Mammary epithelial cell (primary cell): ENCODE measurements at regions of chr7 and their contacts with region 1.

Region 1: GRCh38 chr7:154927624-154928143 is 75.2 kb downstream of the PAXIP1 start:
- DNase-seq: peak; percentile 72
- H3K4me3 ChIP-seq: peak overlapping the region; percentile 56 to 76 (median 60)
- H3K27ac ChIP-seq: peak overlapping the region; percentile 81
- H3K4me1 ChIP-seq: peaks cover 4% of the 10 kb centered on the region
- H3K27me3 ChIP-seq: no peaks in the 10 kb centered on the region
- CTCF ChIP-seq: peak; percentile 66 to 67

Region 2: GRCh38 chr7:154879629-154880028 is 48.1 kb before region 1 on chr7:
- CTCF ChIA-PET with region 1: no interaction called
- dilution Hi-C with region 1: no loop called
- in situ Hi-C with region 1: no loop called
- intact Hi-C with region 1: no loop called
- DNase-seq: no peak
- H3K4me3 ChIP-seq: no peak overlapping the region
- H3K27ac ChIP-seq: no peak overlapping the region
- H3K4me1 ChIP-seq: no peaks in the 10 kb centered on the region
- H3K27me3 ChIP-seq: no peaks in the 10 kb centered on the region
- CTCF ChIP-seq: no peak

Region 3: GRCh38 chr7:155003376-155004214 is 75.9 kb after region 1 on chr7:
- CTCF ChIA-PET with region 1: no interaction called
- dilution Hi-C with region 1: no loop called
- in situ Hi-C with region 1: no loop called
- intact Hi-C with region 1: loop called (anchors 2 kb)
- DNase-seq: peak; percentile 66
- H3K4me3 ChIP-seq: peak overlapping the region; percentile 93 to 99 (median 93)
- H3K27ac ChIP-seq: peak overlapping the region; percentile 78
- H3K4me1 ChIP-seq: no peaks in the 10 kb centered on the region
- H3K27me3 ChIP-seq: no peaks in the 10 kb centered on the region
- CTCF ChIP-seq: no peak

Region 4: GRCh38 chr7:155190688-155191087 is 263.0 kb after region 1 on chr7:
- CTCF ChIA-PET with region 1: no interaction called
- dilution Hi-C with region 1: no loop called
- in situ Hi-C with region 1: no loop called
- intact Hi-C with region 1: loop called (anchors 1 kb)
- DNase-seq: no peak
- H3K4me3 ChIP-seq: peak overlapping the region in 1 of 3 experiments; percentile 0
- H3K27ac ChIP-seq: no peak overlapping the region
- H3K4me1 ChIP-seq: no peaks in the 10 kb centered on the region
- H3K27me3 ChIP-seq: no peaks in the 10 kb centered on the region
- CTCF ChIP-seq: peak; percentile 81 to 94

Region 5: GRCh38 chr7:155298834-155299534 is 371.3 kb after region 1 on chr7:
- CTCF ChIA-PET with region 1: no interaction called
- dilution Hi-C with region 1: no loop called
- in situ Hi-C with region 1: no loop called
- intact Hi-C with region 1: loop called (anchors 2 kb)
- DNase-seq: peak; percentile 97
- H3K4me3 ChIP-seq: peak overlapping the region; percentile 41 to 68 (median 59)
- H3K27ac ChIP-seq: peak overlapping the region; percentile 83
- H3K4me1 ChIP-seq: peaks cover 20% of the 10 kb centered on the region
- H3K27me3 ChIP-seq: no peaks in the 10 kb centered on the region
- CTCF ChIP-seq: no peak

Region 6: GRCh38 chr7:155356323-155357105 is 428.8 kb after region 1 on chr7:
- CTCF ChIA-PET with region 1: interaction called, 3 read pairs
- dilution Hi-C with region 1: no loop called
- in situ Hi-C with region 1: no loop called
- intact Hi-C with region 1: loop called (anchors 1 kb)
- DNase-seq: peak; percentile 20
- H3K4me3 ChIP-seq: no peak overlapping the region
- H3K27ac ChIP-seq: no peak overlapping the region
- H3K4me1 ChIP-seq: no peaks in the 10 kb centered on the region
- H3K27me3 ChIP-seq: peaks cover under 1% of the 10 kb centered on the region
- CTCF ChIP-seq: peak; percentile 31 to 36

Region 7: DNA sequence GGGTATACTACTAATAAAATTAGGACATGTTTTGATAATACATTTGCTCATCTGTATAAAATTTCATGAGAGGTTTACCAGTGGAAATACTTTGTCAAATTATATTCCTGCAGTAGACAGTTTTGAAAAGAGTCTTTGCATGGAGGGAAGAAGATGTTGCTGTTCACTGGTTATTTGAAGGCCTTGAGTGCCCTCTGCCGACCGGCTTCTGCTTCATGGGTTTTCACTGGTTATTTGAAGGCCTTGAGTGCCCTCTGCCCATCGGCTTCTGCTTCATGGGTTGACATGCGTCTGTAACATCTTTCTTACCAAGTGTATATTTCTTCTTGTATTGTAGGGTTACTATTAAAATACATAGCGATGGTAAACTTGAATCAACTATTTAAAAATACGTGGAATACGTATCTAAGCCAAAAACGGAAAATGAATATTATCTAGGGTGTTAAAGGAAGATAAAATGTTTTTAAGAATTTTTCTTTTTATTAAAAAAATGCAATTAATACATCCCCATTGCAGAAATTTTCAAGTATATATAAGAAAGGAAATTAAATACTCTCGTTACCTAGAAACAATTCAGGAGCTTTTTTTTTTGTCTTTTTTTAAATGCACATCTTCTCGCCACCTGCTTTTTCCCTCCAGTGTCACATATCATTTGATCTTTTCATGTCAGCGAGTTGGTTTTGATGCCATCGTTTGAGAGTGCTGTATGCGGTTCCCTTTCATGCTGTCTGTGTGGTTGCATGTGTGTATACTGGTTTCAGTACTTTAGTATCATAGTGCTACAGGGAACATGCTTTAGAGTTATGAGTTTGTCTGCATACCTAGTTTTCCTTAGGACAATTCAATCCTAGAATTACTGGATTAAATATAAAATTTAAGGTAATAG is 811.2 kb after region 1 on chr7:
- CTCF ChIA-PET with region 1: no interaction called
- dilution Hi-C with region 1: no loop called
- in situ Hi-C with region 1: no loop called
- intact Hi-C with region 1: loop called (anchors 5 kb)
- DNase-seq: peak; percentile 60
- H3K4me3 ChIP-seq: no peak overlapping the region
- H3K27ac ChIP-seq: no peak overlapping the region
- H3K4me1 ChIP-seq: peaks cover 10% of the 10 kb centered on the region
- H3K27me3 ChIP-seq: no peaks in the 10 kb centered on the region
- CTCF ChIP-seq: peak; percentile 57 to 70

Region 8: DNA sequence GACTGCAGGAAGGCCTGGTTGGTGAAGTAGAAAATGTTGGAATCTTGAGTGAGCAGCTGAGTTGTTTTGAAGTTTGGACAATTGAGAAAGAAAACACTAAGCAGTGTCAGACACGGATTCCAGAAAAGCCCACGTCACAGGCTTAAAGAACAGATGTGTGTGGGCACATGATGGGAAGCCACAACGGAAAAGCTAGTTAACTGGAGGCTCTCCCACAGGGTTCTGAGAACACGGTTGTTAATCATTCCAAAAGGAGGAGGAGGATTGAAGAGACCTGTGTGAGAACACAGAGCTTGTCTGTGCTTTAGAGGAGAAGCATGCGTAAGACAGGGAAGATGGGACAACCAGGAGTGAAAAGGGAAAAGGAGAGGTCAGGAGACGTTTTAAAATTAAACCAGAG is 842.0 kb after region 1 on chr7:
- CTCF ChIA-PET with region 1: no interaction called
- dilution Hi-C with region 1: no loop called
- in situ Hi-C with region 1: loop called (anchors 25 kb)
- intact Hi-C with region 1: loop called (anchors 2 kb)
- DNase-seq: no peak
- H3K4me3 ChIP-seq: no peak overlapping the region
- H3K27ac ChIP-seq: no peak overlapping the region
- H3K4me1 ChIP-seq: no peaks in the 10 kb centered on the region
- H3K27me3 ChIP-seq: no peaks in the 10 kb centered on the region
- CTCF ChIP-seq: no peak